ENCODE measurements at regions of chr10 and their contacts with region 1.

Region 1: DNA sequence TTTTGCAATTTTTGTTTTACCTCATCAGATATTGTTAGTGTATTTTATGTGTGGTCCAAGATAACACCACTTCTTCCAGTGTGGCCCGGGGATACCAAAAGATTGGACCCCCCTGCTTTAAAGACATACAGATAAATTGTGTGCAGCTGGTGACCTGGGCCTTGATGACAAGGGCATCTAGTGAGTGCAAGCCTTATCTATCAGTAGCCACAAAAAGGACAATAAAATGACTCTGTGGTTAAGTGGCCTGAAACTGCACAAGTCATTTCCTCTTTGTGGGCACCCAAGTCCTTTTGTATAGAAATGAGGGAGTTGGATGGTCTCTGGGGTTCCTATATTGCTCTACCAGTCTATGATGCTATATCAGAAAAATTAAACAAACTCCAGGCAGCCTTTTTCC is 98.1 kb downstream of the PARD3 start:
- DNase-seq: no peak
- ATAC-seq: no peak
- H3K4me3 ChIP-seq: no peak overlapping the region
- H3K27ac ChIP-seq: no peak overlapping the region
- H3K4me1 ChIP-seq: peaks cover 20% of the 10 kb centered on the region
- H3K27me3 ChIP-seq: no peaks in the 10 kb centered on the region
- CTCF ChIP-seq: no peak

Region 2: GRCh38 chr10:34815185-34816084 is 98.5 kb after region 1 on chr10 and contains the start of gene PARD3:
- CTCF ChIA-PET with region 1: no interaction called
- POLR2A ChIA-PET with region 1: interaction called, 17 read pairs
- in situ Hi-C with region 1: no loop called
- intact Hi-C with region 1: no loop called
- DNase-seq: no peak
- ATAC-seq: peak; percentile 89
- H3K4me3 ChIP-seq: peak within 1 kb of the TSS; percentile 64 to 70
- H3K27ac ChIP-seq: peak within 1 kb of the TSS; percentile 51; the same call in 1 of the 2 replicates
- H3K4me1 ChIP-seq: peaks cover 19% of the 10 kb centered on the region
- H3K27me3 ChIP-seq: no peaks in the 10 kb centered on the region
- CTCF ChIP-seq: no peak
- total RNA-seq, gene PARD3: 29.8 TPM

Measured in Panc1 (cell line).